Activated T-helper 2 cell treated with anti-CD3 and anti-CD28 coated beads, Interferon-gamma antibody, Interleukin-2, Interleukin-4, amounts not matched to agents 10 μg/mL and 5 μg/mL and 100 μg/mL, durations not matched to agents 14 hours and 24 hours and 36 hours (primary cell): ENCODE measurements at regions of chr2 and their contacts with region 1.

Region 1: GRCh38 chr2:148603562-148603920 is 41.0 kb upstream of the EPC2 start:
- DNase-seq: peak; percentile 28
- H3K4me3 Mint-ChIP-seq: no peak overlapping the region
- H3K27ac Mint-ChIP-seq: peak overlapping the region; percentile 95
- H3K4me1 Mint-ChIP-seq: peaks cover 28% of the 10 kb centered on the region
- H3K27me3 Mint-ChIP-seq: peaks cover 4% of the 10 kb centered on the region

Region 2: GRCh38 chr2:148020111-148021058 is 583.2 kb before region 1 on chr2 and contains the start of gene ORC4:
- intact Hi-C with region 1: loop called (anchors 1 kb)
- DNase-seq: peak; percentile 94
- H3K4me3 Mint-ChIP-seq: peak within 1 kb of the TSS; percentile 100
- H3K27ac Mint-ChIP-seq: peak within 1 kb of the TSS; percentile 93
- H3K4me1 Mint-ChIP-seq: peaks cover 44% of the 10 kb centered on the region
- H3K27me3 Mint-ChIP-seq: no peaks in the 10 kb centered on the region
- total RNA-seq, gene ORC4: 25.4 and 31.2 TPM in 2 replicates

Region 3: GRCh38 chr2:148410899-148411298 is 192.6 kb before region 1 on chr2:
- intact Hi-C with region 1: no loop called
- DNase-seq: no peak
- H3K4me3 Mint-ChIP-seq: no peak overlapping the region
- H3K27ac Mint-ChIP-seq: no peak overlapping the region
- H3K4me1 Mint-ChIP-seq: no peaks in the 10 kb centered on the region
- H3K27me3 Mint-ChIP-seq: no peaks in the 10 kb centered on the region

Region 4: DNA sequence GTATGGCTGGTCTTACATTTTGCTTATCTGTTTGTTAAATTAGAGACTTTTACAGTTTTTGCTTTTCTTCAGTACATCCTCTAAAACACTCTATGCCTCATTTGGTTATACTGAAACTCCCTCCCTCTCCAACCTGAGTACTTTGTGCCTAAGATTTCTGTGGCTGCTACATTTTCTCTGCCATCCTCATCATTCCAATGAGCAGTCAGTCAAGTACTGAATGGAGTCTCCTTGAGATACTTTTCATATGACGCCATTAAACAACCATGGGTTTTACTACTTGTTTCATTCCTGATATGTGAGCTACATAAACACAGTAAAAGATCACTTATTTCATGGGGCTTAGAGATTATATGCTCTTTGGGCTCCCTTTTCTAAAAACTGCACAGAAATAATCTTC is 155.7 kb before region 1 on chr2:
- intact Hi-C with region 1: no loop called
- DNase-seq: no peak
- H3K4me3 Mint-ChIP-seq: no peak overlapping the region
- H3K27ac Mint-ChIP-seq: no peak overlapping the region
- H3K4me1 Mint-ChIP-seq: no peaks in the 10 kb centered on the region
- H3K27me3 Mint-ChIP-seq: no peaks in the 10 kb centered on the region

Region 5: DNA sequence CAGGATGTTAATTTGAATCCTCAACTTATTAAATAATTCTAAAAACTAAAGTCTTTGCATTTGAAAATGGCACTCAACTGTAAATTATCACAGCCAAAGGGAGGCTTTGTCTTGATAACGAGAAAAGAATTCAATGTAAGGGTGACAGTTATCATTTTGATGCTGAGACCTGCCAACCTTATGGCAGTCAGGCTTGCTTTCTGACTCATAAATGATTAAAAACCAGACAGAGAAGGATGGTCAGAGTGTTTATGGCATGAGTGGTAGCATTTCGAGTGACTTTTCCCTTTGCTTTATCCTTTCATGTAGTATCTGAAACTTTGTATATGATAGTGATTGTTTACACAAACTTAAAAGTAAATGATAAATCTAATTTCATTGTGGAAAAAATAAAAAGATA is 12.9 kb before region 1 on chr2:
- intact Hi-C with region 1: loop called (anchors 1 kb)
- DNase-seq: no peak
- H3K4me3 Mint-ChIP-seq: no peak overlapping the region
- H3K27ac Mint-ChIP-seq: no peak overlapping the region
- H3K4me1 Mint-ChIP-seq: peaks cover 7% of the 10 kb centered on the region
- H3K27me3 Mint-ChIP-seq: peaks cover 3% of the 10 kb centered on the region

Region 6: DNA sequence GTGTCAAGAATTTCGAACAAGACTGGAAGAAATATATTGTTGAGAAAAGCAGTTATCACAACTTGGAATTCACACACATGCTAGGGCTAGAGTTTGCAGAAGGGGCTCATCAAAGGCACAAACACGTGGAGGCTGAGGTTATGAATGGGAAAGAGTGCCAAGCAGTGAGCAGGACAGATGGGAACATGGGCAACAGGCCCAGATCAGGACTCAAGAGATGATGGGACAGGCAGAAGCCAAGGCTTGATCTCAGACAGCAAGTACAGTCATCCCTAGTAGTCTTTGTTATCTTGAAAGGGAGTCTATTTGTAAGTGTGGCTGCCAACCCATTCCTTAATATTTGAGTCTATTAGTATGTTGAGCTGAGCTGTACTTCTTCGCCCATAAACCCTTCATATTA is 18.8 kb after region 1 on chr2:
- intact Hi-C with region 1: no loop called
- DNase-seq: no peak
- H3K4me3 Mint-ChIP-seq: no peak overlapping the region
- H3K27ac Mint-ChIP-seq: no peak overlapping the region
- H3K4me1 Mint-ChIP-seq: peaks cover 3% of the 10 kb centered on the region
- H3K27me3 Mint-ChIP-seq: peaks cover 6% of the 10 kb centered on the region

Region 7: GRCh38 chr2:148658807-148659722 is 55.5 kb after region 1 on chr2:
- intact Hi-C with region 1: loop called (anchors 1 kb)
- DNase-seq: no peak
- H3K4me3 Mint-ChIP-seq: peak overlapping the region; percentile 40
- H3K27ac Mint-ChIP-seq: peak overlapping the region; percentile 70
- H3K4me1 Mint-ChIP-seq: peaks cover 60% of the 10 kb centered on the region
- H3K27me3 Mint-ChIP-seq: no peaks in the 10 kb centered on the region

Region 8: DNA sequence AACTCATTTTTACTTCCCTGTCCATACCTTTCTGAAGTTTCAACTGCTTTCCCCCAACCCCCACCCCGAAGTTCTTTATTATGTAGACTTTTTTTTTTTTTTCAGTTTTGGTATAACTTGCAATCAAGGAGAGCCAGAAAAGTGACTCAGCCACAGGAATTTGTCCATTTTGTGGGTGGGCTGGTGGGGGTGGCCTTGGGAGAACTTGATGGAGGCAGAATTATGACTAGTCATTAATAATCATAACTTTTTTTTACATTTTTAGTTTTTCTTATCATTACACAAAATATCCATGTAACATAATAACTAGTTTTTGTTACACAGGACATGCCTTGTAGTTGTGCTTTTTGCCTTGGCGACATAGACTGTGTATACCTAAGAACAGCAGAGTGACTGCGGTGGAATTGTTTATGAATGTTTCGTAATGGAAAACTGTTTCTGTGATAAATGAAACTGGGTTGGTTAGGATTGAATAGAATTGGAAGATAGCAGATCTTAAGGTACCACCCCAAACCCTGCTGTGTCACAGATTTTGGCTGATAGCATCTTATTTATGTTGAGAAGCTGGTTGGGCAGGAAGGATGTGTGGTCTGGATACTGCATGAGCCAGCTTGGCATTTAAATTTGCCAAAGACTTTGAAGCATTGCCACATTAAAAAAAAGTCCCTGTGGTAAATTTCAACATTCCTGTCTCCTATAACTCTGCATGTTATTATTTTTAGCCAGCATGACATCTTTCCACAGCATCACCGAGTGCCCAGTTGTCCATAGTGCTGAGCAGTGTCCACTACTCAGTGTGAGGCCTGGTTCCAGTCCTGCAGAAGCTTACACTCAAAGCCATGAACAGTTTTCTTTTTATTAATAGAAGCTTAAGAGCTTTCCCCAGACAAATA is 465.7 kb after region 1 on chr2:
- intact Hi-C with region 1: loop called (anchors 1 kb)
- DNase-seq: peak; percentile 43
- H3K4me3 Mint-ChIP-seq: peak overlapping the region; percentile 37
- H3K27ac Mint-ChIP-seq: peak overlapping the region; percentile 79
- H3K4me1 Mint-ChIP-seq: peaks cover 19% of the 10 kb centered on the region
- H3K27me3 Mint-ChIP-seq: peaks cover 27% of the 10 kb centered on the region